ENCODE measurements at regions of chr1 and their contacts with region 1.

Region 1: GRCh38 chr1:44730741-44731512 is at the start of gene RNU5D-1:
- DNase-seq: peak; percentile 86 to 96 (median 94)
- ATAC-seq: peak; percentile 75
- H3K4me3 ChIP-seq: peak within 1 kb of the TSS; percentile 36 to 47
- H3K4me3 Mint-ChIP-seq: peak within 1 kb of the TSS; percentile 84
- H3K27ac ChIP-seq: peak within 1 kb of the TSS; percentile 98 to 99
- H3K27ac Mint-ChIP-seq: peak within 1 kb of the TSS; percentile 100
- H3K4me1 ChIP-seq: peaks cover 14% of the 10 kb centered on the region
- H3K4me1 Mint-ChIP-seq: peaks cover 36% of the 10 kb centered on the region
- H3K27me3 ChIP-seq: no peaks in the 10 kb centered on the region
- H3K27me3 Mint-ChIP-seq: no peaks in the 10 kb centered on the region
- CTCF ChIP-seq: peak; percentile 93
- total RNA-seq, gene RNU5D-1: not detected

Region 2: DNA sequence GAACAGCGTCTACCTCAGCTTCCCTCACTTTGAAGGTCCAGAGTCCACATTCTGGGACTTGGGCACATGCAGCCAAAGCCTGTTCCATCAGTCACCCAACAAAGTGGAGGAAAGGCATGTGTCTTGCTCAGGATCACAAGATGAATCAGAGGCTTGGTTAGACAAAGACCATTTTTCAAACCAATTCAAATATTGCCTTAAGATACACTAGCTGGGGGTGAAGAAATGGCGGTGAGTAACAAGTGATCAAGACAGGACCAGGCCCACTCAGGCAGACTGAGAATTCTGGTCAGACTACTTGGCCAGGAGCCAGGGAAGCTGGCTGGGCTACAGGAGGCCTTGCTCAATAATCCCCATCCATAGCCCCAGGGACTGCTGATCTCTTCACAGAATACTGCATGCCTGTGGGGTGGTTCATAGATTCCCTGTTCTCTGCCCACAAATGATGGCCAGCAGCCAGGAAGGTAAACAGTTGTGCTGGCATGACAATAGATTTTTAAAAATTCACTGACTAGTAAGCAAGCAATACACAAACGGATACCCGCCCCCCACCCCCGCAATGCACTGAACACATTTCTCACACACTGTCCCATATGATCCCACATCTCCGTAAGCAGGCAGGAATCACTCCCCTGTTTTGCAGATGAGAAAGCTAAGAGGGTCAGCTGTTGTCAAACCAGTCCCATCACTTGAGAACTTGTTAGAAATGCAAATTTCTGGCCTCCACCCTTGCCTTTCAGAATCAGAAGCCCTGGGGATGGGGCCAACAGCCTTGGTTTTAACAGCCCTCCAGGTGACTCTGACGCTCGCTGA is 403.0 kb before region 1 on chr1:
- CTCF ChIA-PET with region 1: no interaction called
- POLR2A ChIA-PET with region 1: no interaction called
- intact Hi-C with region 1: no loop called
- DNase-seq: no peak
- ATAC-seq: no peak
- H3K4me3 ChIP-seq: no peak overlapping the region
- H3K4me3 Mint-ChIP-seq: no peak overlapping the region
- H3K27ac ChIP-seq: no peak overlapping the region
- H3K27ac Mint-ChIP-seq: no peak overlapping the region
- H3K4me1 ChIP-seq: no peaks in the 10 kb centered on the region
- H3K4me1 Mint-ChIP-seq: peaks cover 11% of the 10 kb centered on the region
- H3K27me3 ChIP-seq: no peaks in the 10 kb centered on the region
- H3K27me3 Mint-ChIP-seq: no peaks in the 10 kb centered on the region
- CTCF ChIP-seq: no peak

Region 3: GRCh38 chr1:44714944-44715571 is 15.9 kb before region 1 on chr1:
- CTCF ChIA-PET with region 1: interaction called, 46 read pairs
- POLR2A ChIA-PET with region 1: interaction called, 74 read pairs
- intact Hi-C with region 1: loop called (anchors 1 to 2 kb)
- DNase-seq: peak; percentile 37 to 87 (median 63)
- ATAC-seq: peak; percentile 94
- H3K4me3 ChIP-seq: peak overlapping the region in 1 of 2 experiments; percentile 1
- H3K4me3 Mint-ChIP-seq: peak overlapping the region; percentile 64
- H3K27ac ChIP-seq: no peak overlapping the region
- H3K27ac Mint-ChIP-seq: peak overlapping the region; percentile 37
- H3K4me1 ChIP-seq: peaks cover 44% of the 10 kb centered on the region
- H3K4me1 Mint-ChIP-seq: peaks cover 44% of the 10 kb centered on the region
- H3K27me3 ChIP-seq: no peaks in the 10 kb centered on the region
- H3K27me3 Mint-ChIP-seq: no peaks in the 10 kb centered on the region
- CTCF ChIP-seq: peak; percentile 96

Region 4: DNA sequence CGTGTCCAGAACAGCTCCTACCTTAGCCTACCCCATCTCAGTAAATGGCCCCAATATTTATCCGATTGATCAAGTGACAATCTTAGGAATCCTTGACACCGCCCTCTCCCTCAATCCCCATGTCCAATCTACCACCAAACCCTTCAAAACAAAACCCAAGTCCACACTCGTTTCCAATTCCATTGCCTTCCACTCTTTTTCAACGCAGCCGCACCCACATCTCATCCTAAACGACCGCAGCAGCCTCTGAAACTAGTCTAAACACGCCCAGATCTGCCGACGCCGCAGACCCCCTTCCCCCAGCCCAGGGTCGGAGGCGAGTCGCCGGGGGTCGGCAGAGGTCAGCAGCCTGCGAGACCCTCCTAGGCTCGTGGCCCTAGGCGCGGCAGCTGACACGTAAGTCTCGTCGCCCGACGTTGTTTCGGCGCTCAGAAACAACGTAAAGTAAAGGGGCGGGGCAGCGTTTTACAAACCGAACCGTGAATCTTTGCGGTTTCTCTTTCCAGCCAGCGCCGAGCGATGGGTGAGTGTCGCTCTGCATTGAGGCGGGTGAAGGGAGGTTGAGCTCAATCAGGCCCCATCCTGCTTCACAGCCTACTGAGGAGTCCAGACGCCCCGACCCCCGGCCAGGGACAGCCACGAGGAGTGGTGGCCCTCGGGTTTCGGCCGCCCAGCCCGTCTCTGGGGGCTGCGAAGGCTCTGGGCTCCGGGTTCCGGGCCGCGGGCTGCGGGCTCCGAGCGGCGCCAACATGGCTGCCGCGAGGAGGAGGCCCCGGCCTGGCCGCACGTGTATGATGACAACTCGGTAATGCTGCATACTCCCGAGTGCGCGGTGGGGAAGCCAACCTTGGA is 44.4 kb after region 1 on chr1 and contains the start of gene RPS8:
- CTCF ChIA-PET with region 1: interaction called, 19 read pairs
- POLR2A ChIA-PET with region 1: interaction called, 27 read pairs
- intact Hi-C with region 1: loop called (anchors 2 kb)
- DNase-seq: peak; percentile 77 to 96 (median 90)
- ATAC-seq: peak; percentile 80
- H3K4me3 ChIP-seq: peak within 1 kb of the TSS; percentile 84 to 94
- H3K4me3 Mint-ChIP-seq: peak within 1 kb of the TSS; percentile 92
- H3K27ac ChIP-seq: peak within 1 kb of the TSS; percentile 92 to 95
- H3K27ac Mint-ChIP-seq: peak within 1 kb of the TSS; percentile 98
- H3K4me1 ChIP-seq: peaks cover 25% of the 10 kb centered on the region
- H3K4me1 Mint-ChIP-seq: peaks cover 39% of the 10 kb centered on the region
- H3K27me3 ChIP-seq: no peaks in the 10 kb centered on the region
- H3K27me3 Mint-ChIP-seq: no peaks in the 10 kb centered on the region
- CTCF ChIP-seq: no peak
- total RNA-seq, gene RPS8: 3,381 to 3,465 TPM

Region 5: DNA sequence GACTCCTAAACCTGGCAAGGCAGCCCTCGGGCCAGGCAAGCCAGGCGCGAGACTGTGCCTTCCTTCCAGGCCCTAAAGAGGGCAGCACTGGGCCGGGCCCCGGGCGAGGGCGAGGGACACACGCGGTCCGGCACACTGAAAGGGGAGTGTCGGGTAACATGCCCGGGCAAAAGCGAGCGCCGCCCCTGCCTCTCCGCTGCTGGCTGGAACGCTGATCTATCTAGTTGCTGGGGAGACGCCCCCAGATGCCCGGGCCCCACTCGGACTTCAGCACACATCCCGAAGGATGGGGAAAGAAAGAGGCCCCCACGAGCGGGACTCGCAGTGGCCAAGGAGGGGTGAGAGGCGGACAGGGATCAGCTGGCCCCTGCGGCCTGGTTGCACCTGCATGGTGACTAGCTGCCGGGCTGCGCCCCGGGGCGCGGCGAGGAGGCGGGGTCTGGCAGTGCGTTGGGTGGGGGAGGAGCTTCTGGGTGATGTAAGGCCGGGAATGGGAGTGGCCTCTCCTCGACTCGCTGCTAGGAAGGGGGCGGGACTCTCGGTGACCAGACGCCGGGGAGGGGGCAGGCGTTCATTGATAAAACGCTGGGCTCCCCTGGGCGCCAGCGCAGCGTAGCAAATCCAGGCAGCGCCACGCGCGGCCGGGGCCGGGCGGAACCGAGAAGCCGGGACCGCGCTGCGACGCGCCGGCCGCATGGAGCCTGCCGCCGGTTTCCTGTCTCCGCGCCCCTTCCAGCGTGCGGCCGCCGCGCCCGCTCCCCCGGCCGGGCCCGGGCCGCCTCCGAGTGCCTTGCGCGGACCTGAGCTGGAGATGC is 69.0 kb after region 1 on chr1 and contains the start of gene PLK3:
- CTCF ChIA-PET with region 1: interaction called, 5 read pairs
- POLR2A ChIA-PET with region 1: interaction called, 5 read pairs
- intact Hi-C with region 1: loop called in 1 of 2 experiments (anchors 2 kb)
- DNase-seq: peak; percentile 97 to 99 (median 98)
- ATAC-seq: peak; percentile 83
- H3K4me3 ChIP-seq: peak within 1 kb of the TSS; percentile 79 to 95
- H3K4me3 Mint-ChIP-seq: peak within 1 kb of the TSS; percentile 87
- H3K27ac ChIP-seq: peak within 1 kb of the TSS; percentile 91 to 98
- H3K27ac Mint-ChIP-seq: peak within 1 kb of the TSS; percentile 98
- H3K4me1 ChIP-seq: peaks cover 29% of the 10 kb centered on the region
- H3K4me1 Mint-ChIP-seq: peaks cover 37% of the 10 kb centered on the region
- H3K27me3 ChIP-seq: no peaks in the 10 kb centered on the region
- H3K27me3 Mint-ChIP-seq: no peaks in the 10 kb centered on the region
- CTCF ChIP-seq: peak; percentile 81
- total RNA-seq, gene PLK3: 568 to 599 TPM

Region 6: GRCh38 chr1:44819608-44820327 is 88.8 kb after region 1 on chr1:
- CTCF ChIA-PET with region 1: interaction called, 16 read pairs
- POLR2A ChIA-PET with region 1: interaction called, 14 read pairs
- intact Hi-C with region 1: loop called (anchors 1 kb)
- DNase-seq: peak; percentile 72 to 94 (median 80)
- ATAC-seq: peak; percentile 79
- H3K4me3 ChIP-seq: peak overlapping the region; percentile 86 to 87
- H3K4me3 Mint-ChIP-seq: peak overlapping the region; percentile 92
- H3K27ac ChIP-seq: peak overlapping the region; percentile 99 to 100
- H3K27ac Mint-ChIP-seq: peak overlapping the region; percentile 100
- H3K4me1 ChIP-seq: peaks cover 19% of the 10 kb centered on the region
- H3K4me1 Mint-ChIP-seq: peaks cover 35% of the 10 kb centered on the region
- H3K27me3 ChIP-seq: no peaks in the 10 kb centered on the region
- H3K27me3 Mint-ChIP-seq: no peaks in the 10 kb centered on the region
- CTCF ChIP-seq: no peak

Region 7: DNA sequence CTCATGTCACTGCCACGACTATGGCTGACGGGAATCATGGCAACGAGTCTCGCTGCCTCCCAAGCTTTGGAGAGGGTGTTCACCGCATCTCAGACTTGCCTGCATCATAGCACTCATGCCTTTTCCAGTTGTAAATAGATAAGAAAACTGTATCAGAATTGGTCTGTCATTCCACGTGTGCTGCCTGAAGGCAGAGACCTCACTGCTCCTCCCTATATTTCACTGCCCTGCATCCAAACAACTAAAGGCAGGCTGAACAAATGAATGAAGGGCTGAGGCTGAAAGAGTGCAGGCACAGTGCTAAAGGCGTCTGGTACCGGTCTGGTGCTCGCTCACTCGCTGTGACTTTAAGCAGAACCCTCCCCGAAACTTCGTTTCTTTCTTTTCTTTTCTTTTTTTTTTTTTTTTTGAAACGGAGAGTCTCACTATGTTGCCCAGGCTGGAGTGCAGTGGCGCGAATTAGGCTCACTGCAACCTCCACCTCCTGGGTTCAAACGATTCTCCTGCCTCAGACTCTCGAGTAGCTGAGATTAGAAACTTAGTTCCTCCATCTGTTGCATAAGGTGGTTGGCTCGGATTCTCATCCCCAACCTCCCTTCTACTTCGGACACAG is 254.9 kb after region 1 on chr1:
- CTCF ChIA-PET with region 1: no interaction called
- POLR2A ChIA-PET with region 1: no interaction called
- intact Hi-C with region 1: loop called in 1 of 2 experiments (anchors 2 kb)
- DNase-seq: no peak
- ATAC-seq: no peak
- H3K4me3 ChIP-seq: peak overlapping the region; percentile 70 to 85
- H3K4me3 Mint-ChIP-seq: peak overlapping the region; percentile 97
- H3K27ac ChIP-seq: peak overlapping the region; percentile 31 to 42
- H3K27ac Mint-ChIP-seq: peak overlapping the region; percentile 93
- H3K4me1 ChIP-seq: peaks cover 15% of the 10 kb centered on the region
- H3K4me1 Mint-ChIP-seq: peaks cover 30% of the 10 kb centered on the region
- H3K27me3 ChIP-seq: no peaks in the 10 kb centered on the region
- H3K27me3 Mint-ChIP-seq: no peaks in the 10 kb centered on the region
- CTCF ChIP-seq: no peak

Region 8: GRCh38 chr1:45686317-45687013 is 955.5 kb after region 1 on chr1 and contains the start of gene GPBP1L1:
- CTCF ChIA-PET with region 1: no interaction called
- POLR2A ChIA-PET with region 1: no interaction called
- intact Hi-C with region 1: loop called in 1 of 2 experiments (anchors 2 kb)
- DNase-seq: peak; percentile 95 to 98 (median 98)
- ATAC-seq: peak; percentile 72
- H3K4me3 ChIP-seq: peak within 1 kb of the TSS; percentile 99
- H3K4me3 Mint-ChIP-seq: peak within 1 kb of the TSS; percentile 97
- H3K27ac ChIP-seq: peak within 1 kb of the TSS; percentile 84 to 92
- H3K27ac Mint-ChIP-seq: peak within 1 kb of the TSS; percentile 100
- H3K4me1 ChIP-seq: peaks cover 39% of the 10 kb centered on the region
- H3K4me1 Mint-ChIP-seq: peaks cover 59% of the 10 kb centered on the region
- H3K27me3 ChIP-seq: no peaks in the 10 kb centered on the region
- H3K27me3 Mint-ChIP-seq: no peaks in the 10 kb centered on the region
- CTCF ChIP-seq: no peak
- total RNA-seq, gene GPBP1L1: 125 to 128 TPM

Measured in CD8-positive, alpha-beta T cell (primary cell).